ENCODE measurements at regions of chr11 and their contacts with region 1.

Region 1: GRCh38 chr11:85947431-85948272 is 92.5 kb downstream of the CCDC83 start:
- DNase-seq: peak; percentile 59
- H3K4me3 Mint-ChIP-seq: peak overlapping the region; percentile 30
- H3K27ac Mint-ChIP-seq: peak overlapping the region; percentile 78
- H3K4me1 Mint-ChIP-seq: peaks cover 46% of the 10 kb centered on the region
- H3K27me3 Mint-ChIP-seq: no peaks in the 10 kb centered on the region

Region 2: GRCh38 chr11:85269107-85269506 is 678.5 kb before region 1 on chr11:
- CTCF ChIA-PET with region 1: no interaction called
- POLR2A ChIA-PET with region 1: no interaction called
- intact Hi-C with region 1: no loop called
- DNase-seq: no peak
- H3K4me3 Mint-ChIP-seq: no peak overlapping the region
- H3K27ac Mint-ChIP-seq: no peak overlapping the region
- H3K4me1 Mint-ChIP-seq: no peaks in the 10 kb centered on the region
- H3K27me3 Mint-ChIP-seq: no peaks in the 10 kb centered on the region

Region 3: GRCh38 chr11:85759915-85760314 is 187.7 kb before region 1 on chr11:
- CTCF ChIA-PET with region 1: no interaction called
- POLR2A ChIA-PET with region 1: no interaction called
- intact Hi-C with region 1: loop called (anchors 1 kb)
- DNase-seq: no peak
- H3K4me3 Mint-ChIP-seq: no peak overlapping the region
- H3K27ac Mint-ChIP-seq: no peak overlapping the region
- H3K4me1 Mint-ChIP-seq: peaks cover 64% of the 10 kb centered on the region
- H3K27me3 Mint-ChIP-seq: no peaks in the 10 kb centered on the region

Region 4: DNA sequence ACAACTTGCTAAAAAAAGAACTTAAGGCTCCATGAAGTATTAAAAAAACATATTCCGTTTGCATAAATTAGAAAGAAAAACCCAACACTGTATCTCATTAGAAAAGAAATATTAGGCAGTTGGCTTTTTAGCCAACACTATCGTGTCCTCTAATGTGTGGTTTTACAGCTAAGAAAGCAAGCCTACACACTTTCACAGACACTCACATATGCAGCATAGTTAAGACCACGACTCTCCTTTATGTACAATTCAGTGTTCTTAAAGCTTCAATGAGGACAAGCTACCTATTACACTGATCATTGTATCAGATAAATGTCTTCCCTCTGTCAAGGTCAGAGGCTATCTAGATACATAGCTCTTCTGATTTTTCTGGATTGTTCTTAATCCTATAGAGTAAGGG is 41.1 kb after region 1 on chr11:
- CTCF ChIA-PET with region 1: no interaction called
- POLR2A ChIA-PET with region 1: no interaction called
- intact Hi-C with region 1: no loop called
- DNase-seq: no peak
- H3K4me3 Mint-ChIP-seq: no peak overlapping the region
- H3K27ac Mint-ChIP-seq: peak overlapping the region; percentile 39
- H3K4me1 Mint-ChIP-seq: peaks cover 21% of the 10 kb centered on the region
- H3K27me3 Mint-ChIP-seq: no peaks in the 10 kb centered on the region

Region 5: GRCh38 chr11:86047275-86047991 is 99.8 kb after region 1 on chr11:
- CTCF ChIA-PET with region 1: no interaction called
- POLR2A ChIA-PET with region 1: no interaction called
- intact Hi-C with region 1: loop called (anchors 1 kb)
- DNase-seq: peak; percentile 81
- H3K4me3 Mint-ChIP-seq: peak overlapping the region; percentile 60
- H3K27ac Mint-ChIP-seq: peak overlapping the region; percentile 99
- H3K4me1 Mint-ChIP-seq: peaks cover 93% of the 10 kb centered on the region
- H3K27me3 Mint-ChIP-seq: no peaks in the 10 kb centered on the region

Region 6: GRCh38 chr11:86174101-86175046 is 226.7 kb after region 1 on chr11:
- CTCF ChIA-PET with region 1: no interaction called
- POLR2A ChIA-PET with region 1: no interaction called
- intact Hi-C with region 1: loop called (anchors 1 kb)
- DNase-seq: peak; percentile 36
- H3K4me3 Mint-ChIP-seq: no peak overlapping the region
- H3K27ac Mint-ChIP-seq: no peak overlapping the region
- H3K4me1 Mint-ChIP-seq: peaks cover 28% of the 10 kb centered on the region
- H3K27me3 Mint-ChIP-seq: no peaks in the 10 kb centered on the region

Region 7: GRCh38 chr11:86184728-86185380 is 237.2 kb after region 1 on chr11:
- CTCF ChIA-PET with region 1: no interaction called
- POLR2A ChIA-PET with region 1: no interaction called
- intact Hi-C with region 1: no loop called
- DNase-seq: no peak
- H3K4me3 Mint-ChIP-seq: no peak overlapping the region
- H3K27ac Mint-ChIP-seq: no peak overlapping the region
- H3K4me1 Mint-ChIP-seq: peaks cover 13% of the 10 kb centered on the region
- H3K27me3 Mint-ChIP-seq: no peaks in the 10 kb centered on the region

Region 8: DNA sequence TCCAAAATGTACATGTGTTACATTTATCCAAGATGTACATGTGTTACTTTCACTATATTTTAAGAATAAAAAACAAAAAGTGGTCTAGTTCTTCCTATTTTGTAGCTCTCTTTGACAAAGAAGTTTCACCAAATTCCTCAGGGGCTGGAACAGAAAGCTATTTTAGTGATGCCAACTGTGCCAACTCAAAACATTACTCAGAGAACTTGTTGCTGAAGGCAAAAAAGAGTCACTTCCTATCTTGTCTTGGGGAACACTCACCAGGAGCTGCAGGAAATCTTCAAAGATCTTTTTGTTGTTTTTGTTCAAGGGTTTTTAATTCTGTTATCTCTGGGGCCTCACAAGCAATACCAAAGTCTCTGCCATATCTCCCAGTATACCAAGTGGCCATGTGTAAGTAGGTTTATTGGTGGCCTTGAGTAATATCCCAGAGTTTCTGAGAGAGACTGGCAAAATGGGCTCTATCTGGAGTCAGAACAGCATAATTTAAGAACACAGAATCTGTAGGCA is 283.3 kb after region 1 on chr11:
- CTCF ChIA-PET with region 1: no interaction called
- POLR2A ChIA-PET with region 1: interaction called, 3 read pairs
- intact Hi-C with region 1: loop called (anchors 1 kb)
- DNase-seq: no peak
- H3K4me3 Mint-ChIP-seq: no peak overlapping the region
- H3K27ac Mint-ChIP-seq: peak overlapping the region; percentile 77
- H3K4me1 Mint-ChIP-seq: peaks cover 66% of the 10 kb centered on the region
- H3K27me3 Mint-ChIP-seq: no peaks in the 10 kb centered on the region

Region 9: DNA sequence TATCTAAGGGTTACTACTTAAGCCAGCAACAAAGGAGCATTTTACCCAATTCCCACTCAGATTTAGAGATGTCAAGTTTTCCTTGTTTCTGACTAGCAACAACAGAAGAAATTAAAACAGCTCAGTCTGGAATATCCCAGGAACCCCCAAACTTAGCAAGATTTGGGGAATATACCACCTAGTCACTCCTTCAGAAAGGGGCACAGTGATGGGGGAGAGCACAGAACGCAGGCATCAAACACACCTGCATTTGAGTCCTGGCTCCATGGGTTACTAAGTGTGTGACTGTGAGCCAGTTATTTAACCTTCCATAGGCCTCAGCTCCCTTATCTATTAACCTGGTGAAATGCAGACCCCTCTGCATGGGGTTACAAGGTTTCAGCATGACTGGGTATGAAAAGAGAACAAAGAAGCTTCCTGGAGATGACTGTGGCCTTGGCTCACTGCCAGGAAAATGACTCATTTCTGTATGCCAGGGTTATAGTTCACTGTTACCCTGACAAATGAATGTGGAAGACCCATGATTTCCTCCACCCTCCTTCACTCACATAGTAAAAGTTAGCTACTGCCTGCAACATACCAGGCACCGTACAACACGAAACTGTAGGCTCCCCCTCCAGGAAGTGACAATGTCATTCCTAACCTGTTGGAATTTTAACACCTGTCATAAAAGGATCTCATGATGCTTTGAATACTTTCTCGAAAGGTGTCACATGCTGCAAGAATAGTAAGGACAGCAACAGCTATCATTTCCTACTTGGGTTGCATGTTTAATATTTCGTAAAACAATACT is 645.2 kb after region 1 on chr11:
- CTCF ChIA-PET with region 1: no interaction called
- POLR2A ChIA-PET with region 1: interaction called, 3 read pairs
- intact Hi-C with region 1: loop called (anchors 1 kb)
- DNase-seq: peak; percentile 94
- H3K4me3 Mint-ChIP-seq: no peak overlapping the region
- H3K27ac Mint-ChIP-seq: peak overlapping the region; percentile 66
- H3K4me1 Mint-ChIP-seq: peaks cover 51% of the 10 kb centered on the region
- H3K27me3 Mint-ChIP-seq: peaks cover 4% of the 10 kb centered on the region

Measured in activated CD4-positive, alpha-beta memory T cell treated with anti-CD3 and anti-CD28 coated beads for 36 hours (primary cell).